ENCODE measurements at regions of chr5 and their contacts with region 1.

Region 1: DNA sequence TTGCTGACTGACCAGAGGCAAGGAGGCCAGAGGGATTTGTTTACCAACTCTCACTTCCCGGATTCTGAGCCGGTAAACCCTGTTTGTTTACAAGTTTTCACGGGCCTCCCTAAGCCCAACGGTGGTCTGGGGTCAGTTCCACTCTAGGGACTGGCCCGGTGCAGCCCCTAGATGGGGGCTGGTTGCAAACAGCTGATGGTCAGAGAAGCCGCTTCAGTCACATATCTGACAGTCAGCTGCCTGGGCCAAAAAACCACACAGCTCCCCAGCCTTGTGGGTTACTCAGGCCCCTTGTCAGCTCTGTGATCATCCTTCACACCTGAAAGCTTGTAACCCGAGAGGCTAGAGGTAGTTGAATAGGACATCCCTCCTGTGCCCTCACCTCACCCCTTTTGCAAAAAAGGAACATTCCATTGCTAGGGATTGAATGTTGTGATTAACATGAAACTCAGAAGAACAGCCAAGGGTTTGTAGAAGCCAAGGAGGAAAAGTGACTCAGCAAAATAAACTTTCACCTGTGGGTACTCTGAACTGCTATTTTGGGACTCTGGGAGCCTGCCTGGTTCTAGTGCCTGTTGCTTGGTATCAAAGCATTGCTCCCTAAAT is 40.4 kb downstream of the SAR1B start:
- DNase-seq: no peak
- ATAC-seq: no peak
- H3K4me3 Mint-ChIP-seq: no peak overlapping the region
- H3K27ac Mint-ChIP-seq: no peak overlapping the region
- H3K4me1 Mint-ChIP-seq: peaks cover 31% of the 10 kb centered on the region
- H3K27me3 Mint-ChIP-seq: no peaks in the 10 kb centered on the region

Region 2: DNA sequence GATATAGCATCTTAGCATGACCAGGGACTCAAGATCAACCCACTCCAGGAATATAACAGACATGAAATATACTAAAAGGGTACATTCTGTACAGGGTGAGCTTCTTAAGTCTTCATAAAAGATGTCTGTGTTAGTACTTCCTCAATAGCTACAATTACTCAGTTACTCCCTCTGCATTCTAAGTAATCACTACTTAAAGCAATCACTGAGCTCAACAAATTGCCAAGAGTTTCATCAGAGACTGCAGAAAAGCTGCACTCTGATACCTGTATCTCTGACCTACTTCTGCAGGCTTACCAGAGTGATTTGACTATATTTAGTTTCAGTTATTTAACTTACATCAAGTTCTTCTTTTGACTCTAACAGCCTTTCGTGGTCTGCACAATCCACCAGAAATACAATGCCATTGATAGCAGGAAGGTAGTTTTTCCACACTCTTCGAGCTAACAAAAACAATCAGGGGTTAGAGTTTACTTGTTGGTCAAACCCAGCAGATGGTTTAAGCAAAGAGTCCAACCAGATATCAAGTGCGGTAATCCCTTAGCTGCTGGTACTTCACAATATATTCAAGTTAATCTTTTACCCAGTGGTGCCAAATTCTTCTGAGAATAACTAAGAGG is 17.1 kb after region 1 on chr5:
- CTCF ChIA-PET with region 1: interaction called, 46 read pairs
- DNase-seq: no peak
- ATAC-seq: peak; percentile 62
- H3K4me3 Mint-ChIP-seq: peak overlapping the region; percentile 31
- H3K27ac Mint-ChIP-seq: peak overlapping the region; percentile 92
- H3K4me1 Mint-ChIP-seq: peaks cover 47% of the 10 kb centered on the region
- H3K27me3 Mint-ChIP-seq: no peaks in the 10 kb centered on the region